Caco-2 (cell line): ENCODE measurements at regions of chr7 and their contacts with region 1.

Region 1: GRCh38 chr7:133053321-133053891 is 28.5 kb downstream of the CHCHD3 start:
- DNase-seq: no peak
- H3K4me3 ChIP-seq: no peak overlapping the region
- H3K4me3 Mint-ChIP-seq: no peak overlapping the region
- H3K27ac Mint-ChIP-seq: no peak overlapping the region
- H3K4me1 ChIP-seq: peaks cover 29% of the 10 kb centered on the region
- H3K4me1 Mint-ChIP-seq: peaks cover 16% of the 10 kb centered on the region
- H3K27me3 ChIP-seq: no peaks in the 10 kb centered on the region
- H3K27me3 Mint-ChIP-seq: no peaks in the 10 kb centered on the region
- CTCF ChIP-seq: no peak

Region 2: DNA sequence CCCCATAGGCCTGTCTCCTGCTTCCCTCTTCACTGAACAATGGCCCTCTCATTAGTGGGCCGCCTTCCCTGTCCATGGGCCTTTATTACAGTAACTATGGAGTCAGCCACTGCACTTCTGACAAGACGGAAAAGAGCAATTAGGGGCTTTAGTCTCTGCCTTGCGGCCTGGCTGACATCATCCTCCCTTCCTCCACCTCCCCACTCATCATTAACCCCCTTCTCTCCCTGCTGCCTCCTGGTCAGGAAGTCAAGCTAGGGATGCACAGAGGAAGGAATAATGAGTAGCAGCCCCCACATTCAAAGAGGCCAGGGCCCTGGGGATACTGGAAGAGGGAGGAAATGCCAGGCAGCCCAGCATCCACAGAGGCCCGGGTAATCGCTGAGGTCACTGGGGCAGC is 375.5 kb before region 1 on chr7:
- CTCF ChIA-PET with region 1: no interaction called
- POLR2A ChIA-PET with region 1: no interaction called
- intact Hi-C with region 1: no loop called
- DNase-seq: no peak
- H3K4me3 ChIP-seq: no peak overlapping the region
- H3K4me3 Mint-ChIP-seq: no peak overlapping the region
- H3K27ac Mint-ChIP-seq: no peak overlapping the region
- H3K4me1 ChIP-seq: no peaks in the 10 kb centered on the region
- H3K4me1 Mint-ChIP-seq: no peaks in the 10 kb centered on the region
- H3K27me3 ChIP-seq: no peaks in the 10 kb centered on the region
- H3K27me3 Mint-ChIP-seq: peaks cover 24% of the 10 kb centered on the region
- CTCF ChIP-seq: no peak

Region 3: GRCh38 chr7:132866144-132866531 is 187.3 kb before region 1 on chr7:
- CTCF ChIA-PET with region 1: no interaction called
- POLR2A ChIA-PET with region 1: no interaction called
- intact Hi-C with region 1: no loop called
- DNase-seq: no peak
- H3K4me3 ChIP-seq: no peak overlapping the region
- H3K4me3 Mint-ChIP-seq: no peak overlapping the region
- H3K27ac Mint-ChIP-seq: no peak overlapping the region
- H3K4me1 ChIP-seq: no peaks in the 10 kb centered on the region
- H3K4me1 Mint-ChIP-seq: no peaks in the 10 kb centered on the region
- H3K27me3 ChIP-seq: no peaks in the 10 kb centered on the region
- H3K27me3 Mint-ChIP-seq: no peaks in the 10 kb centered on the region
- CTCF ChIP-seq: no peak

Region 4: GRCh38 chr7:133003052-133003910 is 50.1 kb before region 1 on chr7:
- CTCF ChIA-PET with region 1: interaction called, 6 read pairs
- POLR2A ChIA-PET with region 1: no interaction called
- intact Hi-C with region 1: loop called (anchors 2 kb)
- DNase-seq: no peak
- H3K4me3 ChIP-seq: no peak overlapping the region
- H3K4me3 Mint-ChIP-seq: no peak overlapping the region
- H3K27ac Mint-ChIP-seq: no peak overlapping the region
- H3K4me1 ChIP-seq: peaks cover 11% of the 10 kb centered on the region; the same call in 1 of the 2 replicates
- H3K4me1 Mint-ChIP-seq: peaks cover 7% of the 10 kb centered on the region
- H3K27me3 ChIP-seq: no peaks in the 10 kb centered on the region
- H3K27me3 Mint-ChIP-seq: no peaks in the 10 kb centered on the region
- CTCF ChIP-seq: no peak